Activated CD4-positive, alpha-beta T cell treated with anti-CD3 and anti-CD28 coated beads for 36 hours (primary cell): ENCODE measurements at regions of chr16 and their contacts with region 1.

Region 1: DNA sequence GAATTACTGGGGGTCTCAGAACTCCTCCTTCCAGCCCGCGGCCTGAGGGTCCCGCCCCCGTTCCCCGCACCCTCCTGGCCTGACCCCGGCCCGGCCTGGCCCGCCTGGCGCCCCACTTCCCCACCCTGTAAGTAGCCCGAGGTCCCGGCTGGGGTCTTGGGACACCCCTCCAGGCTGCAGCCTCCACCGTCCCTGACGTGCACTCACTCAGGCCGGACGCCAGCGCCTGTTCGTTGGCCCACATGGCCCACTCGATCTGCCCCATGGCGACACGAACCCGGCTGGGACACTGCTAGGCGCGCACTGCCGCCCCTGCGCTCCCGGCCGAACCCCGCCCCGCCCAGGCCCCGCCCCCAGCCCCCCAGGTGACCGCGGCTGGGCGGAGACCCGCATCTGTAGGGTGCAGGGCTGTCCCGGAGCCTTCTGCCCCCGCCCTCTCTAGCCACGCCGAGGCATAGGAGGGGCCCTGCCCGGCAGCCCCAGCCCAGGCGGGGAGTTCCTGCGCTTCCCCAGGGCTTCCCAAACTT is at the start of gene CYBA:
- DNase-seq: peak; percentile 92
- ATAC-seq: peak; percentile 87
- H3K4me3 Mint-ChIP-seq: peak within 1 kb of the TSS; percentile 85
- H3K27ac Mint-ChIP-seq: peak within 1 kb of the TSS; percentile 93
- H3K4me1 Mint-ChIP-seq: peaks cover 15% of the 10 kb centered on the region
- H3K27me3 Mint-ChIP-seq: no peaks in the 10 kb centered on the region
- total RNA-seq, gene CYBA: 155 to 200 TPM

Region 2: GRCh38 chr16:88569985-88570690 is 80.7 kb before region 1 on chr16 and contains the start of gene ZC3H18:
- CTCF ChIA-PET with region 1: no interaction called
- POLR2A ChIA-PET with region 1: no interaction called
- intact Hi-C with region 1: loop called in 1 of 2 experiments (anchors 1 kb)
- DNase-seq: peak; percentile 99
- ATAC-seq: peak; percentile 83
- H3K4me3 Mint-ChIP-seq: peak within 1 kb of the TSS; percentile 88
- H3K27ac Mint-ChIP-seq: peak within 1 kb of the TSS; percentile 79
- H3K4me1 Mint-ChIP-seq: peaks cover 44% of the 10 kb centered on the region
- H3K27me3 Mint-ChIP-seq: no peaks in the 10 kb centered on the region
- total RNA-seq, gene ZC3H18: 70.0 to 76.4 TPM

Region 3: GRCh38 chr16:88662843-88663606 is 12.2 kb after region 1 on chr16 and contains the start of gene MVD:
- CTCF ChIA-PET with region 1: no interaction called
- POLR2A ChIA-PET with region 1: no interaction called
- intact Hi-C with region 1: loop called (anchors 1 kb)
- DNase-seq: peak; percentile 98
- ATAC-seq: peak; percentile 99
- H3K4me3 Mint-ChIP-seq: peak within 1 kb of the TSS; percentile 92
- H3K27ac Mint-ChIP-seq: peak within 1 kb of the TSS; percentile 88
- H3K4me1 Mint-ChIP-seq: peaks cover 14% of the 10 kb centered on the region
- H3K27me3 Mint-ChIP-seq: no peaks in the 10 kb centered on the region
- total RNA-seq, gene MVD: 62.8 to 81.1 TPM

Region 4: GRCh38 chr16:88700636-88701482 is 50.0 kb after region 1 on chr16:
- CTCF ChIA-PET with region 1: no interaction called
- POLR2A ChIA-PET with region 1: no interaction called
- intact Hi-C with region 1: loop called (anchors 1 to 2 kb)
- DNase-seq: peak; percentile 98
- ATAC-seq: peak; percentile 80
- H3K4me3 Mint-ChIP-seq: peak overlapping the region; percentile 92
- H3K27ac Mint-ChIP-seq: peak overlapping the region; percentile 97
- H3K4me1 Mint-ChIP-seq: peaks cover 55% of the 10 kb centered on the region
- H3K27me3 Mint-ChIP-seq: no peaks in the 10 kb centered on the region

Region 5: DNA sequence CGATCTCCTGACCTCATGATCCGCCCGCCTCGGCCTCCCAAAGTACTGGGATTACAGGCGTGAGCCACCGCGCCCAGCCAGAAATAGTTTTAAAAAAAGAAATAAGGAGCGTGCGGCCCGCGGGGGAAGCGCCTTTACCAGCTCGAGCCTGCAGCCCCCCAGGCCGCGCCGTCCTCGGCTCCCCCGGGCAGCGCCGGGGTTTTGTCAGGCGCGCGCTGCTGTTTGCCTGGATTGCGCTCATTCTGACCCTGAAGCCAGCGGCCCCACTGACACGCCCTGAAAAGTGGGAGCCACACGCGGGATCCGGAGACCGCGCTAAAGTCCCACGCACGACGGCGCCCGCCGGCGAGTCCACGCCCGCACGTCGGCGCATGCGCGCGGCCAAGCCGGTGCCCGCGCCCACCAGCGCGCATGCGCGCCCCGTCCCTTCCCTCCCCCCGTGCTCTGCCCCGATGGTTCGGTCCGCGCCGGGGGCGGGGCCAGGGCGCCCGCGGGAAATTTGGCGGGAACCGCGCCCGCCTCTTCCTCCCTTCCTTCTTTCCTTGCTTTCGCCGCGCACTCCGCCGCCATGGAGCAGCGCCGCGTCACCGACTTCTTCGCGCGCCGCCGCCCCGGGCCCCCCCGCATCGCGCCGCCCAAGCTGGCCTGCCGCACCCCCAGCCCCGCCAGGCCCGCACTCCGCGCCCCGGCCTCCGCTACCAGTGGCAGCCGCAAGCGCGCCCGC is 152.6 kb after region 1 on chr16 and contains the start of gene CDT1:
- CTCF ChIA-PET with region 1: no interaction called
- POLR2A ChIA-PET with region 1: no interaction called
- intact Hi-C with region 1: loop called in 1 of 2 experiments (anchors 1 kb)
- DNase-seq: peak; percentile 90
- ATAC-seq: peak; percentile 32
- H3K4me3 Mint-ChIP-seq: peak within 1 kb of the TSS; percentile 83
- H3K27ac Mint-ChIP-seq: peak within 1 kb of the TSS; percentile 94
- H3K4me1 Mint-ChIP-seq: peaks cover 24% of the 10 kb centered on the region
- H3K27me3 Mint-ChIP-seq: no peaks in the 10 kb centered on the region
- total RNA-seq, gene CDT1: 136 to 182 TPM

Region 6: DNA sequence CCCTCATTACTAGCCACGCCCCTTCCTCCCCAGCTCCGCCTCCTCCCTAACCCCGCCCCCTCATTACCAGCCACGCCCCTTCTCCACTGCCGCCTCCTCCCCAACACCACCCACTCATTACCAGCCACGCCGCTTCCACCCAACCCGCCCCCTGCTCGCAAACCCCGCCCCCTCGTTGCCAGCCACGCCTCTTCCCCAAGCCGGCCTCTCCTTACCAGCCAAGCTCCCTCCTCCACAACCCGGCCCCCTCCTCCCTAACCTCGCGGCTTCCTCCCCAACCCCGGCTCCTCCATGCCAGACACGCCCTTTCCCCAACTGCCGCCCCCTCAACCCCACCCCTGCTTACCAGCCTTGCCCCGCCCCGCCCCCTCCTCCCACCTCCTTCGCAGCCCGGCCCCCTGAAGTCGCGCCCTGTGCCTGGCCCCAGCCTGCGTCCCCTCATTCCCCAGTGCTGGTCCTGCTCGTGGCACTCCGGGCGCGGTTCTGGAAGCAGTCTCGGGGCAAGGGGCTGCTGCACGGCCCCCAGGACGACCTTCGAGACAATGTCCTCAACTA is 542.3 kb after region 1 on chr16:
- CTCF ChIA-PET with region 1: no interaction called
- POLR2A ChIA-PET with region 1: no interaction called
- intact Hi-C with region 1: loop called in 1 of 2 experiments (anchors 1 kb)
- DNase-seq: no peak
- ATAC-seq: peak; percentile 78
- H3K4me3 Mint-ChIP-seq: no peak overlapping the region
- H3K27ac Mint-ChIP-seq: no peak overlapping the region
- H3K4me1 Mint-ChIP-seq: no peaks in the 10 kb centered on the region
- H3K27me3 Mint-ChIP-seq: no peaks in the 10 kb centered on the region